WTC11 (cell line): ENCODE measurements at regions of chr18 and their contacts with region 1.

Region 1: GRCh38 chr18:848062-848861 is 36.2 kb upstream of the YES1 start:
- DNase-seq: no peak
- ATAC-seq: no peak
- H3K4me3 Mint-ChIP-seq: no peak overlapping the region
- H3K27ac Mint-ChIP-seq: no peak overlapping the region
- H3K4me1 Mint-ChIP-seq: 0 out of 2 replicates have a peak, but pooled peaks cover 3% of the 10 kb centered on the region
- H3K27me3 Mint-ChIP-seq: peaks cover 13% of the 10 kb centered on the region
- CTCF ChIP-seq: no peak

Region 2: GRCh38 chr18:634551-635045 is 213.7 kb before region 1 on chr18:
- CTCF ChIA-PET with region 1: no interaction called
- POLR2A ChIA-PET with region 1: interaction called, 11 read pairs
- DNase-seq: no peak
- ATAC-seq: peak; percentile 61
- H3K4me3 Mint-ChIP-seq: peak overlapping the region; percentile 54
- H3K27ac Mint-ChIP-seq: peak overlapping the region; percentile 77
- H3K4me1 Mint-ChIP-seq: peaks cover 31% of the 10 kb centered on the region
- H3K27me3 Mint-ChIP-seq: no peaks in the 10 kb centered on the region
- CTCF ChIP-seq: no peak